ENCODE measurements at regions of chr1 and their contacts with region 1.

Region 1: DNA sequence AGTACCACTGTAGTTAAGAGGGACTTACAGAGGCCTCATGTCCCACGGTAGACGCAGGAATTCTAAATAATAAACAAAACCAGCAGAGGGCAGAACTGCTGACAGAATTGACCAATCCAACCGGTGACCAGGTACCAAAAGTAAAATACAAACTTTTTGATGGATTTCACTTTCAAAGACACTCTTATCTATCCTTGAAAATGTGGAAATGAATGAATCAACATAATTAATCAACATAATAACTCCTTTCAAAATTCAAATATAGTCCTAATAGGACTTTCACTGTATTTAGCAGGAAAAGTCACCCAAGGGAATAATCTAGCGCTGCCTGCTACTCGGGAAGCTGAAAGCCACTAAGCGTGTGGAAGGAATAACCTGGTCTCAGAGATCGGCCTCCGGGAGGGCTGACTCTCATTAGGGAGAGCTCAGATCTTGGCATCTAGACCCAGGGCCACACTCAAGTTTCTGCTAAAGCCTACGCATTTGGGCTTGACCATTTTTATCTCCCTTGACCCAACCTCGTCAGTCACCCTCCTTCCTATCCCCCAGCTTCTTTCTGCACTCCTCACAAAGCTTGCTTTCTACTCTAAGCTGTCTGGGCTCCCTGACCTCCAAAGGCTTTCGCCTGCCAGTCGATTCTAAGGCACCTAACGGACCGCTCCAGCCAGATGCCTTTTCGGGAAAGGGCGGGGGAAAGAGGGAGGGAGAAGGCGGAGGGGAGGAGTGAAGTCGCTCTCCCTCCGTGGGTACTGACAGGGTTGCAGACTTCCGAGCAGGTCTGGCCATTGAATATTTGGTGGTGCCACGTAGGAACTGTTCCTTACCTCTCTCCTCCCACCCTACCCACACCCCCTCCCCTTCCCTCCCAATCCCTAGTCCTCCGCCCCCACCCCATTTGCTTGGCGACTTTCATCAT is 1.6 kb downstream of the COL11A1 start:
- DNase-seq: peak; percentile 14 to 39 (median 17)
- ATAC-seq: peak; percentile 75 to 81
- H3K4me3 ChIP-seq: peak overlapping the region; percentile 59
- H3K27ac ChIP-seq: no peak overlapping the region
- H3K4me1 ChIP-seq: no peaks in the 10 kb centered on the region
- H3K27me3 ChIP-seq: no peaks in the 10 kb centered on the region

Region 2: GRCh38 chr1:103514920-103515503 is 408.3 kb after region 1 on chr1:
- intact Hi-C with region 1: loop called in 1 of 4 experiments (anchors 10 kb)
- DNase-seq: no peak
- ATAC-seq: no peak
- H3K4me3 ChIP-seq: no peak overlapping the region
- H3K27ac ChIP-seq: no peak overlapping the region
- H3K4me1 ChIP-seq: no peaks in the 10 kb centered on the region
- H3K27me3 ChIP-seq: no peaks in the 10 kb centered on the region

Measured in right cardiac atrium (tissue), 5 donors.